Activated B cell treated with CpG ODN at 0.5 μM for 24 hours (primary cell): ENCODE measurements at regions of chr17 and their contacts with region 1.

Region 1: GRCh38 chr17:59372138-59372857 is 40.8 kb downstream of the YPEL2 start:
- DNase-seq: no peak
- ATAC-seq: peak; percentile 33
- H3K4me3 Mint-ChIP-seq: peak overlapping the region; percentile 59
- H3K27ac Mint-ChIP-seq: peak overlapping the region; percentile 89
- H3K4me1 Mint-ChIP-seq: peaks cover 88% of the 10 kb centered on the region
- H3K27me3 Mint-ChIP-seq: no peaks in the 10 kb centered on the region
- CTCF ChIP-seq: no peak

Region 2: GRCh38 chr17:59347975-59348391 is 24.3 kb before region 1 on chr17:
- CTCF ChIA-PET with region 1: no interaction called
- POLR2A ChIA-PET with region 1: interaction called, 16 read pairs
- intact Hi-C with region 1: no loop called
- DNase-seq: no peak
- ATAC-seq: no peak
- H3K4me3 Mint-ChIP-seq: no peak overlapping the region
- H3K27ac Mint-ChIP-seq: peak overlapping the region; percentile 68
- H3K4me1 Mint-ChIP-seq: peaks cover 83% of the 10 kb centered on the region
- H3K27me3 Mint-ChIP-seq: no peaks in the 10 kb centered on the region
- CTCF ChIP-seq: no peak

Region 3: GRCh38 chr17:59361916-59362810 is 10.1 kb before region 1 on chr17:
- CTCF ChIA-PET with region 1: interaction called, 3 read pairs
- POLR2A ChIA-PET with region 1: interaction called, 18 read pairs
- intact Hi-C with region 1: loop called (anchors 1 kb)
- DNase-seq: no peak
- ATAC-seq: peak; percentile 77
- H3K4me3 Mint-ChIP-seq: peak overlapping the region; percentile 42
- H3K27ac Mint-ChIP-seq: peak overlapping the region; percentile 87
- H3K4me1 Mint-ChIP-seq: peaks cover 84% of the 10 kb centered on the region
- H3K27me3 Mint-ChIP-seq: no peaks in the 10 kb centered on the region
- CTCF ChIP-seq: no peak

Region 4: GRCh38 chr17:59440784-59441441 is 68.6 kb after region 1 on chr17:
- CTCF ChIA-PET with region 1: interaction called, 4 read pairs
- POLR2A ChIA-PET with region 1: interaction called, 6 read pairs
- intact Hi-C with region 1: loop called (anchors 2 kb)
- DNase-seq: peak; percentile 56
- ATAC-seq: peak; percentile 91
- H3K4me3 Mint-ChIP-seq: no peak overlapping the region
- H3K27ac Mint-ChIP-seq: no peak overlapping the region
- H3K4me1 Mint-ChIP-seq: peaks cover 48% of the 10 kb centered on the region
- H3K27me3 Mint-ChIP-seq: peaks cover 4% of the 10 kb centered on the region
- CTCF ChIP-seq: peak; percentile 45